ENCODE measurements at regions of chr3 and their contacts with region 1.

Region 1: GRCh38 chr3:156449712-156450574 is 105.0 kb downstream of the SSR3 start:
- DNase-seq: no peak
- H3K4me3 Mint-ChIP-seq: no peak overlapping the region
- H3K27ac Mint-ChIP-seq: no peak overlapping the region
- H3K4me1 Mint-ChIP-seq: no peaks in the 10 kb centered on the region
- H3K27me3 Mint-ChIP-seq: peaks cover 5% of the 10 kb centered on the region

Region 2: GRCh38 chr3:156040041-156040440 is 409.9 kb before region 1 on chr3:
- CTCF ChIA-PET with region 1: no interaction called
- intact Hi-C with region 1: loop called (anchors 5 kb)
- DNase-seq: no peak
- H3K4me3 Mint-ChIP-seq: no peak overlapping the region
- H3K27ac Mint-ChIP-seq: no peak overlapping the region
- H3K4me1 Mint-ChIP-seq: no peaks in the 10 kb centered on the region
- H3K27me3 Mint-ChIP-seq: peaks cover 6% of the 10 kb centered on the region

Region 3: GRCh38 chr3:156388497-156389448 is 61.2 kb before region 1 on chr3:
- CTCF ChIA-PET with region 1: no interaction called
- intact Hi-C with region 1: no loop called
- DNase-seq: no peak
- H3K4me3 Mint-ChIP-seq: no peak overlapping the region
- H3K27ac Mint-ChIP-seq: no peak overlapping the region
- H3K4me1 Mint-ChIP-seq: no peaks in the 10 kb centered on the region
- H3K27me3 Mint-ChIP-seq: peaks cover 7% of the 10 kb centered on the region

Region 4: DNA sequence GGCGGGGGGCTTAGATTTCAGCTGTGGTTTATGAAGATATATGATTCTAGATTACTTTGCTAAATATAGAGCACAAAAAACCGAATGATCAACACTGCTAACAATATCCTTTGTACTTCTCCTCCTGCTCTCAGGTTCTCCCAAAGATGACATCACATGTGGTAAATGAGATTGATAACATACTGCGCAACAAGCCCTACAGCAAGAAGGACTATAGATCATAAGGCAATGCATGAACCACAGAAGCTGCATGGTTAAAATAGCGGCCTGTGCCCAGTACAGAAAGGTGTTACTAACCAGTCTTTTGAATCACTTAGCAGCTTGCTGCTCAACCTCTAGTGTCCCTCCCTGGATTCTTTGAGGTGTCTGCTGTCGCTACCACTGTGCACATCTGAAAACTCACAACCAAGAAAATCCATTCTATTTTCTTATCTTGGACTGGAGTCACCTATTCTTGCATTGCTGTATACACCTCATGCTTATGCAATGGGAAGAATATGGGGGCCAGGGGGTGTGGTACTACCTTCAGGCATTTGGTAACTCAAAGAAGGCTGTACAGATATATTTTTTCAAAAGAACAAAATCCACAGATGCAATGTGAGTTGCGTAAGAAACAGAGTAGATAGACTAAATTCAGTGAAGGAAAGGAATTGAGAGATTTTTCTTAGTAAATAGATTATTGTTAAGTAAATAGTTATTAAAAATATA is 86.7 kb after region 1 on chr3:
- CTCF ChIA-PET with region 1: no interaction called
- intact Hi-C with region 1: loop called (anchors 1 kb)
- DNase-seq: no peak
- H3K4me3 Mint-ChIP-seq: no peak overlapping the region
- H3K27ac Mint-ChIP-seq: no peak overlapping the region
- H3K4me1 Mint-ChIP-seq: peaks cover 4% of the 10 kb centered on the region
- H3K27me3 Mint-ChIP-seq: no peaks in the 10 kb centered on the region

Region 5: DNA sequence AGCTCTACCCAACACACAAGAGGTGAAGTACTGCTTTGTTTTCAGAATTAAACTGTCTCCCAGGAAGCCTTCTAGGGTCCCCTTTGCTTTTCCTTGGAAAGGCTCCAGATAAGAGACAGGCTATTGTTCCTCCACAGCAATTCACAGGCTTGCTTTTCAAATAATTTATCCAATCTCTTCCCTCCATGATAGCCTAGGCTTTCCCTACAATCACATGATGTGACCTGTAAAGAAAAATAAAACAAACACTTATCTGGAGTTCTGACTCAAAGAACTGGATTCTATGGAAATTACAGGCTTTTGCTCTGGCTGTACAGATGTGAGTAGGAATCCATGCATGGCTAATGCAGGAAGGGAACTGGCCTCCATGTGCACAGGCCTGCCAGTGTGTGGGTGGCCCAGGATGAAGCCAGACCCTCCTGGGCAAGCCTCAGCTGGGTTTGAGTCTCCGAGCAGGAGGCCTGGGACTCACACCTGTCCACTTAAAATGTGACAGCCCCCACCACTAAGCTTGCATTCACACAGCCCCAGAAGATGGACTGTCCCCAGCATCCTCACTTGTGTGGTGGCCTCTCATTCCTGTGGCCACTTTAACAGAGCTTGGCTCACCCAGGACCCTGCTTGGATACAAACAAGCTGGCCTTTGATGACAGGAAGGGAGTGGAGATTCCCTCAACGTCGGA is 300.4 kb after region 1 on chr3:
- CTCF ChIA-PET with region 1: no interaction called
- intact Hi-C with region 1: no loop called
- DNase-seq: no peak
- H3K4me3 Mint-ChIP-seq: no peak overlapping the region
- H3K27ac Mint-ChIP-seq: no peak overlapping the region
- H3K4me1 Mint-ChIP-seq: no peaks in the 10 kb centered on the region
- H3K27me3 Mint-ChIP-seq: peaks cover 11% of the 10 kb centered on the region